Heart right ventricle (tissue), 16 donors: ENCODE measurements at regions of chr5 and their contacts with region 1.

Region 1: GRCh38 chr5:43019614-43020293 is 20.4 kb downstream of the ANXA2R start:
- DNase-seq: peak; percentile 40 to 71
- ATAC-seq: peak; percentile 35 to 53 (median 46)
- H3K4me3 ChIP-seq: peak overlapping the region; percentile 36 to 69 (median 58)
- H3K27ac ChIP-seq: peak overlapping the region; percentile 62 to 97 (median 95)
- H3K4me1 ChIP-seq: peaks cover 0 to 42% (median 17%) of the 10 kb centered on the region in 9 donors
- H3K27me3 ChIP-seq: peaks cover 0 to 87% (median 55%) of the 10 kb centered on the region in 7 donors
- CTCF ChIP-seq: peak in 8 of 9 donors; percentile 18 to 56 (median 47)

Region 2: GRCh38 chr5:41843456-41844370 is 1176.0 kb before region 1 on chr5:
- intact Hi-C with region 1: no loop called
- DNase-seq: peak in 1 of 2 donors; percentile 51
- ATAC-seq: peak in 6 of 8 donors; percentile 49 to 77 (median 70)
- H3K4me3 ChIP-seq: no peak overlapping the region
- H3K27ac ChIP-seq: no peak overlapping the region
- H3K4me1 ChIP-seq: peaks cover 0 to 11% (median 0%) of the 10 kb centered on the region in 9 donors
- H3K27me3 ChIP-seq: no peaks in the 10 kb centered on the region
- CTCF ChIP-seq: peak; percentile 56 to 87 (median 79)

Region 3: GRCh38 chr5:42970636-42971559 is 48.9 kb before region 1 on chr5:
- intact Hi-C with region 1: no loop called
- DNase-seq: peak in 1 of 2 donors; percentile 29
- ATAC-seq: peak in 1 of 8 donors; percentile 29
- H3K4me3 ChIP-seq: no peak overlapping the region
- H3K27ac ChIP-seq: no peak overlapping the region
- H3K4me1 ChIP-seq: no peaks in the 10 kb centered on the region
- H3K27me3 ChIP-seq: peaks cover 0 to 29% (median 13%) of the 10 kb centered on the region in 7 donors
- CTCF ChIP-seq: peak in 6 of 9 donors; percentile 21 to 45 (median 28)

Region 4: GRCh38 chr5:42994246-42995151 is 25.3 kb before region 1 on chr5:
- intact Hi-C with region 1: loop called in 1 of 10 experiments (anchors 2 kb)
- DNase-seq: peak; percentile 80 to 93
- ATAC-seq: peak; percentile 62 to 84 (median 80)
- H3K4me3 ChIP-seq: peak overlapping the region; percentile 53 to 76 (median 64)
- H3K27ac ChIP-seq: peak overlapping the region; percentile 66 to 100 (median 96)
- H3K4me1 ChIP-seq: peaks cover 0 to 63% (median 16%) of the 10 kb centered on the region in 9 donors
- H3K27me3 ChIP-seq: peaks cover 0 to 100% (median 91%) of the 10 kb centered on the region in 7 donors
- CTCF ChIP-seq: peak; percentile 69 to 90 (median 86)

Region 5: DNA sequence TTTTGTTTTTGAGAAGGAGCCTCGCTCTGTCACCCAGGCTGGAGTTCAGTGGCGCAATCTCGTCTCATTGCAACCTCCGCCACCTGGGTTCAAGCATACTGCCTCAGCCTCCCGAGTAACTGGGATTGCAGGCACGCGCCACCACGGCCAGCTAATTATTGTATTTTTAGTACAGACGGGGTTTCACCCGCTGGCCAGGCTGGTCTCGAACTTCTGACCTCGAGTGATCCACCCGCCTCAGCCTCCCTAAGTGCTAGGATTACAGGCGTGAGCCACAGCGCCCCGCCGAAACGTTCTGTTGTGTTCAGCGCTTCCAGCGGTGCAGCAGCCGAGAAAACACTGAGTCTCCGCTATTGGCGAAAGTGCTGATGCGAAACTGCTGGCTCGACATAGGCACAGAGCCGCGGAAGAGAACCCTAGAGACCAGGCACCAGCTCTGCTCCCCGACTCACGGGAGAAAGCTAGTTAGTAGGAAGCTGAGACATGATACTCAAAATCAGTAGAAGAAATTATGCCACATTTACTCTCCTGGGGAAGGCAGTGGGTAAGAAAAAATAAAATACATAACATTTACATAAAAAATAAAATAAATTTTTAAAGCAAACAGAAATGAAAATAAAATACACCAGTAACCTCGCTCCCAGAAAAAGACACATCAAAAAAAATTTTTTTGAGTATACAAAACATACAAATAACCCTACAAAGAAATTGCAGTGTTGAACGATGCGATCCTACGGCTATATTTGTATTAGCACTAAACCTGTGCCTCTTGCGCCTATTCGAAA is 11.2 kb before region 1 on chr5:
- intact Hi-C with region 1: loop called in 1 of 10 experiments (anchors 1 kb)
- DNase-seq: peak; percentile 85 to 92
- ATAC-seq: peak; percentile 81 to 93 (median 88)
- H3K4me3 ChIP-seq: peak overlapping the region; percentile 34 to 67 (median 55)
- H3K27ac ChIP-seq: peak overlapping the region; percentile 72 to 97 (median 90)
- H3K4me1 ChIP-seq: peaks cover 0 to 43% (median 10%) of the 10 kb centered on the region in 9 donors
- H3K27me3 ChIP-seq: peaks cover 0 to 74% (median 57%) of the 10 kb centered on the region in 7 donors
- CTCF ChIP-seq: peak in 1 of 9 donors; percentile 17

Region 6: DNA sequence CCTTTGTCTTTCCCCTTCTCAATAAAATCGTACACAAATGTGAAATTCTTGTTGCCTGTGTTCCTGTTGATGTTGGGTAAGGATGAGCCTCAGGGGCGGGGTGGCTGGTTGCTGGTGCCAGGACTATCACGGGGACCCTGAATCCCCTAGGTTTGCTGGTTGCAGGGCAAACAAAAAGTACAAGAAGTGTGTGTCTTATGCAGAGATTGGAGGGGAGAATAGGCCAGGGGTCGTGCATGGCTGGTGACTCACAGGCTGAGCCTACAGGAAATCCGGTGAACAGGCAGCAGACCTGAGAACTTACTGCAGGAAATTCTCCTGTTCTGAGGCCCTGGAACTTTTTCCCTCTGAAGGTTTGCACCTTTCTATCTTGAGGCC is 14.8 kb after region 1 on chr5:
- intact Hi-C with region 1: loop called in 3 of 10 experiments (anchors 1 to 2 kb)
- DNase-seq: no peak
- ATAC-seq: peak in 2 of 8 donors; percentile 25 to 28
- H3K4me3 ChIP-seq: peak overlapping the region in 6 of 10 donors; percentile 25 to 48 (median 42)
- H3K27ac ChIP-seq: peak overlapping the region in 9 of 10 donors; percentile 16 to 82 (median 62)
- H3K4me1 ChIP-seq: peaks cover 0 to 43% (median 18%) of the 10 kb centered on the region in 9 donors
- H3K27me3 ChIP-seq: peaks cover 0 to 67% (median 37%) of the 10 kb centered on the region in 7 donors
- CTCF ChIP-seq: no peak